Breast epithelium (tissue), 4 donors: ENCODE measurements at regions of chr11 and their contacts with region 1.

Region 1: DNA sequence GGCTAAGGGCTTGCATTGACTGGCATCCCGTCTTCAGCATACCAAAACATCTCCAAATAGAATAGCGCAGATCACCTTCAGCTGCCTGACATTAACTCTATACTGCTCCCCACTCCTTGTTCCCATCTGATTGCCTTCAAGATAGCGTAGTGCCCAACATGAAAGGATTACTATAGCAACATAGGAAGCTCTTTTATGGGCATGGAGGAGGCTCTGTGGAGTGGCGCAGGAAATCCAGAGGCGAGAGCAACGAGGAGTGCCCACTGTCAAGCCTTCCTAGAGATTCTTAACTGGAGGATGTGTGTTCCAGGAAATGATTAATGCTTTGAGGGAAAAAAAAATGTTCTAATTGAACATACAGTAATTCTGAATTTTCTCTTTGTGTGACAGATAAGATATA is 213.3 kb downstream of the CADM1 start:
- DNase-seq: no peak
- H3K4me3 ChIP-seq: no peak overlapping the region
- H3K27ac ChIP-seq: no peak overlapping the region
- H3K4me1 ChIP-seq: no peaks in the 10 kb centered on the region
- H3K27me3 ChIP-seq: no peaks in the 10 kb centered on the region
- CTCF ChIP-seq: no peak
- POLR2A ChIP-seq: no peak

Region 2: DNA sequence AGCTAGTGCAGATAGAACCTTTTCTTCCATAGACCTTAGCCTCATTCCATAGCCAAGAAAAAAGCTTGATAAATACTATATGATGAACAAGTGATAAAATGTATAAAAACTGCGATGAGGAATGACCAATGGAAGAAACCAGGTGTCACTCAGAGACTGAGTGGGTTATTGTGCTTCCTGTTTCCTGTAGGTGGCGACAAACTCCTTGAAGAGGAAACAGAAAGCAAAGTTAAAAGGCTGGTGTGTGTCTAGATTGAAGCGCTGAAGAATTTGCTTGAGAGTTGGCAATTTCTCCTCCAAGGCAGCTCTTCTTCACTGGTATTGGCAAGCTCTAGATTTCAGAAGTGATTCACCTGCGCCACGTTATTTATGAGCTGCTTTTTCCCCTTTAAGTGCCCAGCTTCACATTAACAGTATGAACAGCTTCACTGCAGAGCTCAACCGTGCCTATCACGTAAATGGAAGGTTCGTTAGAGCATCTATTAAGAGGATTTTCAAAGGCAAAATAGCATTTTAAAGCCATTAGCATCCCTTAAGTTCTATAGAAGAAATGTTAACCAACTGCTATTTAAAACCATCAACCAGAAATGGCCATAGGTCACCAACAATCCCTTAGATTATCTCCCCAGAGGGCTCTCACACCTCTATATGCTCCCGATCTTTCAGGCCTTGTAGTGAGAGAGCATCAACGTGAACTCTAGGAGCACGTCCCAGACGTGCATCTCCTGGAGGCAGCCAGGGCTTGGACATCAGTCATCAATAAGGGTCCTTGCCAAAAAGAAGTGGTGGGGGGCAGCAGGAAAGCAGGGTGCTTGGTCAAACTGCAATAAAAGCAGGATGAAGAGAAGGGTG is 33.9 kb after region 1 on chr11:
- intact Hi-C with region 1: no loop called
- DNase-seq: no peak
- H3K4me3 ChIP-seq: peak overlapping the region in 2 of 3 donors; percentile 2 to 26
- H3K27ac ChIP-seq: no peak overlapping the region
- H3K4me1 ChIP-seq: no peaks in the 10 kb centered on the region
- H3K27me3 ChIP-seq: no peaks in the 10 kb centered on the region
- CTCF ChIP-seq: peak; percentile 57 to 77 (median 71)
- POLR2A ChIP-seq: no peak

Region 3: GRCh38 chr11:115379528-115379927 is 88.6 kb after region 1 on chr11:
- intact Hi-C with region 1: loop called (anchors 5 kb)
- DNase-seq: no peak
- H3K4me3 ChIP-seq: no peak overlapping the region
- H3K27ac ChIP-seq: no peak overlapping the region
- H3K4me1 ChIP-seq: no peaks in the 10 kb centered on the region
- H3K27me3 ChIP-seq: peaks cover 0 to 2% of the 10 kb centered on the region in 2 donors
- CTCF ChIP-seq: no peak
- POLR2A ChIP-seq: no peak